ENCODE measurements at regions of chr9 and their contacts with region 1.

Region 1: GRCh38 chr9:105414947-105415661 is 32.7 kb upstream of the FSD1L start:
- DNase-seq: peak in 1 of 2 donors; percentile 37
- ATAC-seq: peak; percentile 56 to 69
- H3K4me3 ChIP-seq: no peak overlapping the region
- H3K27ac ChIP-seq: no peak overlapping the region
- H3K4me1 ChIP-seq: peaks cover 0 to 4% of the 10 kb centered on the region in 2 donors
- H3K27me3 ChIP-seq: no peaks in the 10 kb centered on the region
- CTCF ChIP-seq: peak; percentile 79 to 89 (median 86)
- POLR2A ChIP-seq: no peak

Region 2: DNA sequence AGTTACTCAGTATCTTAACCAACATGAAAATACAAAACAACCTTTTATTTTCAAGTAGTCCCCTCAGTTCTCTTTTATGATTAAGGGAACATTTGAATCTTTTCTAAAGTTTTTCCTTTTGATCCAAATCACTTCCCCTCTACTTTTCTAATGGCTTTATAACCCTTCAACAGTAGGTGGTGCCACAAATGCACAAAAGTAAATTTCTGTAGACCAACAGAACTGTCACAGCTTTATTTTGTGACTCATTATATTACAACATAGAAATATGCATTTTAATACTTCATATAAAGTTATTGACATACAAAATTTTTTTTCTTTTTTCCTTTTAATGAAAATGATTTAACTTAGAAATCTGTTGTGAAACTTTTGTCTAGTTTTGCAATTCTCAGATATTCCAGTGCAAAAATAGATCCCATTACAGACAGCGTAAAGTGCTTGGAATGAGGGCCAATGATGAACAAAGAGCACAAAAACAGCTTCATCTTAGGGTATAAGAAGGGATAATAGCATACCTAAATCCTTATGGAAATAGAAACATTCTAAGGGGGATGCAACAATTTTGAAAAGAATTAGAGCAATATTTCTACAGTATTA is 634.2 kb before region 1 on chr9:
- in situ Hi-C with region 1: loop called in 2 of 4 experiments (anchors 25 kb)
- intact Hi-C with region 1: no loop called
- DNase-seq: no peak
- ATAC-seq: no peak
- H3K4me3 ChIP-seq: no peak overlapping the region
- H3K27ac ChIP-seq: peak overlapping the region; percentile 8 to 89 (median 24)
- H3K4me1 ChIP-seq: peaks cover 15 to 21% of the 10 kb centered on the region in 2 donors
- H3K27me3 ChIP-seq: no peaks in the 10 kb centered on the region
- CTCF ChIP-seq: peak in 1 of 5 experiments; percentile 17
- POLR2A ChIP-seq: no peak

Region 3: GRCh38 chr9:104895572-104895971 is 519.5 kb before region 1 on chr9:
- in situ Hi-C with region 1: loop called in 1 of 4 experiments (anchors 25 kb)
- intact Hi-C with region 1: no loop called
- DNase-seq: no peak
- ATAC-seq: peak in 1 of 2 donors; percentile 38
- H3K4me3 ChIP-seq: no peak overlapping the region
- H3K27ac ChIP-seq: no peak overlapping the region
- H3K4me1 ChIP-seq: peaks cover 20 to 60% of the 10 kb centered on the region in 2 donors
- H3K27me3 ChIP-seq: no peaks in the 10 kb centered on the region
- CTCF ChIP-seq: no peak
- POLR2A ChIP-seq: no peak

Region 4: DNA sequence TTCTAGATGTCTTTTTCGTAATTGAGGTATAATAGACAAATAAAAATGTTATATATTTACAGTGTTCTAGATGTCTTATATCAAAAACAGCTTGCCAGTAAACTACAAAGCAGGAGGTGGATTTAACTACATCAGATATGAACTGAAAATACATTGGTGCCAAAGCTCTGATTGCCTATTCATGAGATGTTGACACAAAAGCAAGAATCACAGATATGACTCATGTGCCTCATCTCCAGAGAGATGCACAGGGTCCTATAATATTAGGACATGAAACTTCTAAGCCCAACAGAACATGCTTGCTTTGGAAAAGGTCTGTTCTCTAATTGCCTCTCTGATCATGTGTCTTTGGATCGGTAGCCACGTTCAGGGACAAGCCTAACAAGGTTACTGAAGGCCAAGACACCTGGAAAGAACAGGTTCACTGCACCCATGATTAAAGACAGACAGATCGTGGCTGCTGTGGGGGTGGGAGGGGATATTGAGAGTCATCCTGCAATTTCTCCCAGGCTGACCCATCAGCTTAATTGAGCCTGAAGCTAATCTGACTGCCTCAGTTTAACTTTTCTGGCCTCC is 504.0 kb before region 1 on chr9:
- in situ Hi-C with region 1: no loop called
- intact Hi-C with region 1: no loop called
- DNase-seq: no peak
- ATAC-seq: peak; percentile 3 to 30
- H3K4me3 ChIP-seq: no peak overlapping the region
- H3K27ac ChIP-seq: peak overlapping the region; percentile 43 to 58 (median 52)
- H3K4me1 ChIP-seq: peaks cover 87 to 98% of the 10 kb centered on the region in 2 donors
- H3K27me3 ChIP-seq: no peaks in the 10 kb centered on the region
- CTCF ChIP-seq: no peak
- POLR2A ChIP-seq: no peak

Region 5: GRCh38 chr9:105157130-105157583 is 257.9 kb before region 1 on chr9:
- in situ Hi-C with region 1: loop called in 3 of 4 experiments (anchors 5 to 10 kb)
- intact Hi-C with region 1: loop called (anchors 5 kb)
- DNase-seq: peak; percentile 14 to 57
- ATAC-seq: peak; percentile 96 to 98
- H3K4me3 ChIP-seq: no peak overlapping the region
- H3K27ac ChIP-seq: no peak overlapping the region
- H3K4me1 ChIP-seq: peaks cover 3 to 5% of the 10 kb centered on the region in 2 donors
- H3K27me3 ChIP-seq: no peaks in the 10 kb centered on the region
- CTCF ChIP-seq: peak in 4 of 5 experiments; percentile 38 to 60 (median 58)
- POLR2A ChIP-seq: no peak

Region 6: GRCh38 chr9:105187778-105188177 is 227.3 kb before region 1 on chr9:
- in situ Hi-C with region 1: no loop called
- intact Hi-C with region 1: loop called (anchors 1 kb)
- DNase-seq: no peak
- ATAC-seq: no peak
- H3K4me3 ChIP-seq: no peak overlapping the region
- H3K27ac ChIP-seq: no peak overlapping the region
- H3K4me1 ChIP-seq: no peaks in the 10 kb centered on the region
- H3K27me3 ChIP-seq: no peaks in the 10 kb centered on the region
- CTCF ChIP-seq: no peak
- POLR2A ChIP-seq: no peak

Region 7: DNA sequence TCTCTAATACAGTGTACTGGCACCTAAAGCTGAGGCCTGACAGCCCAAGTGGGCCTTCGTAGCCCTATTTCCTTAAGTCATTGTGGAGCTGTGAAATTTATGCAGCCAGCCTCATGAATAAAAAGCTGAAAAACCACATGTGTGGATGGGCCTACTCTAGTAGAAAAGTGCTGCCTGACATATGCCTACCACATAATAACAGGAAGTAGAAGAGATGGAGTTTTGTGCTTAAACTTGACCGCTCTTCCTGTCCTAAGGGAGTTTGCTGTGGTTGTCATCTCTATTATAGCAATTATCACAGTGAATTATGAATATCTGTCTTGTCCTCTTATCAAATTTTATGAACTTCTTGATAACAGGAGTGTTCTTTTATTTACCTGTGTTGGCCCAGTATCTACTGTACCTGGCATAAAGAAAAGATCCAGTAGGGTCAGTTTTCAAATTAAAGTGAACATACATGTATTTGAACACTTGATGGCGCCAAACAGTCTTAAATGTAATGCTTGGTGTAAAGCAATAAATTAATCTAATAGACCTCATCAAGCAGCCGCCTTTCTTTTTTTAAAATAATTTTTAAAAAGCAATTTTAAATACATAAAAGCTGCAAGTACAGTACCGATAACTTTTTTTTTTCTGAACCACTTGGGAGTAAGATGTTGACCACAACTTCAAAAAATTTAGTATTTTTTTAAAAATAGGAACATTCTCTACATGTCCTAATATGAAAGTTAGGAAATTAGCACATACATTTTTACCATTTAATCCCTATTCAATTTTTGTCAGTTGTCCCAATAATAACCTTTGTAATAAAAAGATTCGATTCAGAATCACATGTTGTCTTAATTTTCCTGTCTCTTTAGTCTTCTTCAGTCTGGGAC is 193.9 kb after region 1 on chr9:
- in situ Hi-C with region 1: no loop called
- intact Hi-C with region 1: no loop called
- DNase-seq: no peak
- ATAC-seq: peak; percentile 55 to 63
- H3K4me3 ChIP-seq: no peak overlapping the region
- H3K27ac ChIP-seq: no peak overlapping the region
- H3K4me1 ChIP-seq: no peaks in the 10 kb centered on the region
- H3K27me3 ChIP-seq: no peaks in the 10 kb centered on the region
- CTCF ChIP-seq: peak; percentile 30 to 73 (median 48)
- POLR2A ChIP-seq: no peak

Region 8: DNA sequence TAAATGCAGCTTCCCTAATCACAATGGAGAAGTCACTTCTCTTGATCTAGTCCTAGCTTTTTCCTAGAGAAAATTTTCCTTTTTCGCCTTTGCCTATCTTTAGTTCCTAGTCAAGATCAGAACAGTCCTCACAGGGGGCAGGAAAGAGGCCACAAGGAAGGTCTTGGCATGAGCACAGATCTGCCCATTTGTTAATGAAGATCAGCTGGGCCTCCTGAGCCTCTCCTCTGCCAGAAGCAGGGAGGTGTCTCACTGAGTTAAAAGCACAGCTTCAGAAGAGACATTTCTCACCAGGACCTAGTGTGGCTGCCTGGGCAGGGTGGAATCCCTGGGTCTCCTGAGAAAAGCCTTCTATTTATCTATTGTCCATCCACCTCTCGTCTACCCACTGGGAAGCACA is 637.1 kb after region 1 on chr9:
- in situ Hi-C with region 1: no loop called
- intact Hi-C with region 1: no loop called
- DNase-seq: no peak
- ATAC-seq: no peak
- H3K4me3 ChIP-seq: no peak overlapping the region
- H3K27ac ChIP-seq: no peak overlapping the region
- H3K4me1 ChIP-seq: no peaks in the 10 kb centered on the region
- H3K27me3 ChIP-seq: no peaks in the 10 kb centered on the region
- CTCF ChIP-seq: no peak
- POLR2A ChIP-seq: no peak

Measured in gastrocnemius medialis (tissue), 4 donors.